CD4-positive, alpha-beta memory T cell (primary cell): ENCODE measurements at regions of chr6 and their contacts with region 1.

Region 1: DNA sequence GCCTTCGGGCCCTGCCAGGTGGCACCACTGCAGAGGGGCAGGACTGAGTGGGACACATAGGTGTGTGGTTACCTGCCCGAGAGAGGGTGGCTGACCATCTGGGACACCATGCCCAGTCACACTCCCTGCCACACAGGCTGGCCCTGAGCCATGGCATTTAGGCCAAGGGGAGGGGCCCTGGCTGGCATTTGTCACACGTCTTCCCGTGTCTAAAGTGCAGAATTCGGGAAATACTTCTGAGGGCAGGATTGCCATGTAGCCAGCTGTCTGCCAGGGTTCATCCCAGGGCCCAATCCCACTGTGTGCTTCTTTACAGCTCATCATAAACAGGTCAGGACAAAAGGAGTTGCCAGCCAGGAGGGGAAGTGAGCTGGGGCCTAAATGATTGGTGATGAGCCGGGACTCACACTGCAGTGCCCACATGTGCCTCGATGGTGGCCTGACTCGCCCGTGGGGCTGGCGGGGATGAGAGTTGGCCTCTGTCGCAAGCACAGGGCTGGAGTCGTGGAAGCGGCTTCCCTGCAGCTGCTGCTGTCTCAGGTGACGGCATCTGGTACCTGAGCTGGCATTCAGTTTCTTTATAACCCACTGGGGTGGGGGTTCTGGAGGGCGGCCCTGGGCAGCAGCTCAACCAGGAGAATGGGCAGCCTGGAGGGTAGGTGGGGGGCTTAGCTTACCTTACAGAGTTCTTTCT is 5.9 kb upstream of the UNC93A start:
- DNase-seq: no peak
- H3K4me3 ChIP-seq: no peak overlapping the region
- H3K4me3 Mint-ChIP-seq: no peak overlapping the region
- H3K27ac ChIP-seq: no peak overlapping the region
- H3K27ac Mint-ChIP-seq: no peak overlapping the region
- H3K4me1 ChIP-seq: no peaks in the 10 kb centered on the region
- H3K4me1 Mint-ChIP-seq: no peaks in the 10 kb centered on the region
- H3K27me3 ChIP-seq: no peaks in the 10 kb centered on the region
- H3K27me3 Mint-ChIP-seq: peaks cover 4 to 5% of the 10 kb centered on the region in 2 donors

Region 2: DNA sequence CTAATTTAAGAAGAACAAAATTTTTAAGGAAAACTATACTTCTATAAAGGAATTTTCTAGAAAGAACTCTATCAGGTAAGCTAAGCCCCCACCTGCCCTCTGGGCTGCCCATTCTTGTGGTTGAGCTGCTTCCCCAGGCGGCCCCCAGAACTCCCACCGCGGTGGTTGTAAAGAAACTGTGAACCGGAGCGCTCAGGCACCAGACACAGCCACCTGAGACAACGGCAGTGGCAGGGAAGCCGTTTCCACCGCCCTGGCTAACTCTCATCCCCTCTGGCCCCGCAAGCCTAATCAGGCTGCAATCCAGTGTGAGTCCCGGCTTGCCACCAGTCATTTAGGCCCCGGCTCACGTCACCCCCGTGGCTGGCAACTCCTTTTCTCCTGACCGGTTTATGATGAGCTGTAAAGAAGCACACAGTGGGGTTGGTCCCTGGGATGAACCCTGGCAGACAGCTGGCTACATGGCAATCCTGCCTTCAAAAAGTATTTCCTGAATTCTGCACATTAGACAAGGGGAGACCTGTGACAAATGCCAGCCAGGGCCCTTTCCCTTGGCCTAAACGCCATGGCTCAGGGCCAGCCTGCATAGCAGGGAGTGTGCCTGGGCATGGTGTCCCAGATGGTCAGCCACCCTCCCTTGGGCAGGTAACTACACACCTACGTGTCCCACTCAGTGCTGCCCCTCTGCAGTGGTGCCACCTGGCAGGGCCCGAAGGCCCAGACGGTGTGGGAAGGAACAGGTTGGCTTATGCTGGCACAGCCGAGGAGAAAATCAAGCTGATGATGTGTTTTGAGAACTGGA is 63.6 kb before region 1 on chr6:
- CTCF ChIA-PET with region 1: no interaction called
- POLR2A ChIA-PET with region 1: no interaction called
- intact Hi-C with region 1: loop called (anchors 1 kb)
- DNase-seq: no peak
- H3K4me3 ChIP-seq: no peak overlapping the region
- H3K4me3 Mint-ChIP-seq: peak overlapping the region in 1 of 8 donors; percentile 52
- H3K27ac ChIP-seq: no peak overlapping the region
- H3K27ac Mint-ChIP-seq: no peak overlapping the region
- H3K4me1 ChIP-seq: no peaks in the 10 kb centered on the region
- H3K4me1 Mint-ChIP-seq: peaks cover 0 to 4% (median 0%) of the 10 kb centered on the region in 4 donors
- H3K27me3 ChIP-seq: no peaks in the 10 kb centered on the region
- H3K27me3 Mint-ChIP-seq: peaks cover 3 to 8% of the 10 kb centered on the region in 2 donors

Region 3: DNA sequence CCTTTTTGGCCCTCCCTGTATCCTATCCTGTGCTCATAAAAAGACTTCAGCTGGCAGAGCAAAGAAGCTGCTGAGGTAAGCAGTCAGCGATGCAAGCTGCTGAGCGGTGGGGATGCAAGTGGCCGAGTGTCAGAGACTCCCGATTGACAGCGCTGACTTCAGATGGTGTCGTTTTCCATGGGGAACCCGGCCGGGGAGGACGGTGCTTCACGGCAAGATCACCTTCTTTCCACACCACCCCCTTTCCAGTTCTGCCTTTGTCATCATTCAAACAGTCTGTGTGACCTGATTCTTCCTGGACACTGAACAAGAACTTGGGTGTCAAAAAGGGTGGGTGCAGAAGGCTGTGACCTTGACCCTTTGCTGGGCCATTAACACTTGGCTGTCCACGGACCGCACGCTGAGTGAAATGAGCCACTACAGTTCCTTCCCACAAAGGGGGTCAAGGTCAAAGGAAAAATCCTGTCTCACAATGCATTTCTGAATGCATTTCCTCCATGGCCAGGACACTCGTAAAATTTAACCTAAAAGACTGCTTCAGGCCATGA is 47.0 kb before region 1 on chr6:
- CTCF ChIA-PET with region 1: no interaction called
- POLR2A ChIA-PET with region 1: no interaction called
- intact Hi-C with region 1: no loop called
- DNase-seq: no peak
- H3K4me3 ChIP-seq: no peak overlapping the region
- H3K4me3 Mint-ChIP-seq: no peak overlapping the region
- H3K27ac ChIP-seq: no peak overlapping the region
- H3K27ac Mint-ChIP-seq: no peak overlapping the region
- H3K4me1 ChIP-seq: no peaks in the 10 kb centered on the region
- H3K4me1 Mint-ChIP-seq: peaks cover 0 to 2% (median 0%) of the 10 kb centered on the region in 4 donors
- H3K27me3 ChIP-seq: no peaks in the 10 kb centered on the region
- H3K27me3 Mint-ChIP-seq: peaks cover 13 to 17% of the 10 kb centered on the region in 2 donors

Region 4: GRCh38 chr6:167298153-167298552 is 12.9 kb after region 1 on chr6:
- CTCF ChIA-PET with region 1: interaction called, 13 read pairs
- POLR2A ChIA-PET with region 1: no interaction called
- intact Hi-C with region 1: no loop called
- DNase-seq: no peak
- H3K4me3 ChIP-seq: no peak overlapping the region
- H3K4me3 Mint-ChIP-seq: no peak overlapping the region
- H3K27ac ChIP-seq: no peak overlapping the region
- H3K27ac Mint-ChIP-seq: no peak overlapping the region
- H3K4me1 ChIP-seq: no peaks in the 10 kb centered on the region
- H3K4me1 Mint-ChIP-seq: peaks cover 0 to 1% (median 0%) of the 10 kb centered on the region in 4 donors
- H3K27me3 ChIP-seq: no peaks in the 10 kb centered on the region
- H3K27me3 Mint-ChIP-seq: peaks cover 8 to 22% of the 10 kb centered on the region in 2 donors